ENCODE measurements at regions of chr18 and their contacts with region 1.

Region 1: DNA sequence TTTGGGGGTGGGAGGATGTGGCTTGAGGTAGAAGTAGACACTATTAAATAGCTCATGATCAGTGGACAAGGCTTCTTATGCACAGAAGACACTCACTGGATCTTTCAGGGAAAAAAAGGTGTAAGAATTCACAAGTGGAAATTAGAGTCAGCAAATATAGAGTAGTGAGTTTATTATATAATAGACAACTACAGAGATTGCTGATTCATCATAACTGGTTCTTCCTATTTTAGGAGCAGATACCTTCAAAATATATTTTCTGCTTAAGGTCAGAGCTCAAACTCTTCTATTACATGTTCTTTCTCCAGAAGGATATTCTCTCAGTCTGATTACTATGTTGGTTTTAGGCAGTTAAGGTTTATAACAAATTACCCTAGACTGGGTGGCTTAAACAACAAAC is 646.9 kb upstream of the CDH7 start:
- DNase-seq: no peak
- ATAC-seq: no peak
- H3K4me3 Mint-ChIP-seq: no peak overlapping the region
- H3K27ac Mint-ChIP-seq: no peak overlapping the region
- H3K4me1 Mint-ChIP-seq: no peaks in the 10 kb centered on the region
- H3K27me3 Mint-ChIP-seq: no peaks in the 10 kb centered on the region

Region 2: GRCh38 chr18:64765908-64766307 is 338.0 kb before region 1 on chr18:
- CTCF ChIA-PET with region 1: no interaction called
- POLR2A ChIA-PET with region 1: no interaction called
- intact Hi-C with region 1: no loop called
- DNase-seq: no peak
- ATAC-seq: no peak
- H3K4me3 Mint-ChIP-seq: no peak overlapping the region
- H3K27ac Mint-ChIP-seq: no peak overlapping the region
- H3K4me1 Mint-ChIP-seq: no peaks in the 10 kb centered on the region
- H3K27me3 Mint-ChIP-seq: no peaks in the 10 kb centered on the region

Region 3: GRCh38 chr18:65049586-65049985 is 54.3 kb before region 1 on chr18:
- CTCF ChIA-PET with region 1: interaction called, 3 read pairs
- POLR2A ChIA-PET with region 1: no interaction called
- intact Hi-C with region 1: loop called in 1 of 2 experiments (anchors 10 kb)
- DNase-seq: no peak
- ATAC-seq: no peak
- H3K4me3 Mint-ChIP-seq: no peak overlapping the region
- H3K27ac Mint-ChIP-seq: no peak overlapping the region
- H3K4me1 Mint-ChIP-seq: no peaks in the 10 kb centered on the region
- H3K27me3 Mint-ChIP-seq: no peaks in the 10 kb centered on the region

Region 4: GRCh38 chr18:65671621-65672415 is 568.0 kb after region 1 on chr18:
- CTCF ChIA-PET with region 1: no interaction called
- POLR2A ChIA-PET with region 1: no interaction called
- intact Hi-C with region 1: no loop called
- DNase-seq: no peak
- ATAC-seq: no peak
- H3K4me3 Mint-ChIP-seq: no peak overlapping the region
- H3K27ac Mint-ChIP-seq: no peak overlapping the region
- H3K4me1 Mint-ChIP-seq: no peaks in the 10 kb centered on the region
- H3K27me3 Mint-ChIP-seq: no peaks in the 10 kb centered on the region

Measured in activated CD4-positive, alpha-beta T cell treated with anti-CD3 and anti-CD28 coated beads for 36 hours (primary cell).